Breast epithelium (tissue), 4 donors: ENCODE measurements at regions of chr16 and their contacts with region 1.

Region 1: DNA sequence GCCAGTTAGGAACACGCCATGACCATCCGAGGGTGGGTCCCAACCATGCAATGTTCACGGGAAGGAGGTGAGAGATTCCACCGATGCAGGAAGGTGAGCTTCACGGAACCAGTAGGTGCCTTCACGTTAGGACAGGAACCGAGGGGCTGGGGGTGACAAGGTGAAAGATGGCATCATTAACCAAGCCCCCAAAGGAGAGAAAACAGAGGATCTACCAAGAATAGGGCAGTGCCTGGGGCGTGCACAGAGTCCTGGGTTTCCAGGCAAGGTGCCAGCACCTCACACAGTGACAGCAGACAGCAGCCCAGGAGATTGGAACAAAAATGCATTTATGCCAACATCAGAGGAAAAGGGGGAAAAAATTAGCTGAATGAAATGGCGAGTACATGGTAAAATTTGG is 137.9 kb downstream of the GSG1L start:
- DNase-seq: no peak
- H3K4me3 ChIP-seq: no peak overlapping the region
- H3K27ac ChIP-seq: no peak overlapping the region
- H3K4me1 ChIP-seq: no peaks in the 10 kb centered on the region
- H3K27me3 ChIP-seq: peaks cover 0 to 18% of the 10 kb centered on the region in 2 donors
- CTCF ChIP-seq: no peak
- POLR2A ChIP-seq: no peak

Region 2: GRCh38 chr16:27737513-27737912 is 188.1 kb before region 1 on chr16:
- intact Hi-C with region 1: no loop called
- DNase-seq: no peak
- H3K4me3 ChIP-seq: no peak overlapping the region
- H3K27ac ChIP-seq: no peak overlapping the region
- H3K4me1 ChIP-seq: no peaks in the 10 kb centered on the region
- H3K27me3 ChIP-seq: no peaks in the 10 kb centered on the region
- CTCF ChIP-seq: no peak
- POLR2A ChIP-seq: no peak

Region 3: GRCh38 chr16:27899736-27900135 is 25.9 kb before region 1 on chr16:
- intact Hi-C with region 1: loop called (anchors 2 kb)
- DNase-seq: no peak
- H3K4me3 ChIP-seq: no peak overlapping the region
- H3K27ac ChIP-seq: no peak overlapping the region
- H3K4me1 ChIP-seq: no peaks in the 10 kb centered on the region
- H3K27me3 ChIP-seq: peaks cover 0 to 25% of the 10 kb centered on the region in 2 donors
- CTCF ChIP-seq: no peak
- POLR2A ChIP-seq: no peak